ENCODE measurements at regions of chr1 and their contacts with region 1.

Region 1: DNA sequence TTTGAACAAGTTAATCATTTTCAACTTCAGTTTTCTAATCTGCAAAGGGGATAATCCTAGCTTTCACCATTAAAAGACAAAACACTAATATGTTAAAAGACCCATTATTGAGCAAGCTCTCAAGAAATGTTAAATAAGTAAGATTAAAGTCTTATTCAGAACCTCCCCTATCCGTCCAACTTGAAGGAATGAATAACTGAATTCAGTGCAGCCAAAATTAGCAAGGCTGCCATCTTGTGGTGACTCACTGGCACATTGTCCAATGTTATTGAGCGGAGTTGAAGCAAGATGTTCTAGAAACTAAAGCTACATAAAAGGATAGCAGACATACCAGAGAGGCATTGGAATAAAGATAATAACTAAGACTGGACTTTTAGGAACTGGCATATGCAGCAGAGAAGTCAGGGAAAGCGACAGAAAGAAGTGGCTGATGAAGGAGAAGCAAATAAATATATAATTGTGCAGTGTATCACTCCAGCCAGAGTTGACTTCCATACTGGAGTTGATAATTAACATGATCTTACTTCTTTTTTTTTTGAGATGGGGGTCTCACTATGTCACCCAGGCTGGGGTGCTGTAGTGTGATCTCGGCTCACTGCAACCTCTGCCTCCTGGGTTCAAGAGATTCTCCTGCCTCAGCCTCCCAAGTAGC is 8.2 kb upstream of the CAP1 start:
- DNase-seq: peak in 8 of 10 donors; percentile 31 to 89 (median 59)

Region 2: DNA sequence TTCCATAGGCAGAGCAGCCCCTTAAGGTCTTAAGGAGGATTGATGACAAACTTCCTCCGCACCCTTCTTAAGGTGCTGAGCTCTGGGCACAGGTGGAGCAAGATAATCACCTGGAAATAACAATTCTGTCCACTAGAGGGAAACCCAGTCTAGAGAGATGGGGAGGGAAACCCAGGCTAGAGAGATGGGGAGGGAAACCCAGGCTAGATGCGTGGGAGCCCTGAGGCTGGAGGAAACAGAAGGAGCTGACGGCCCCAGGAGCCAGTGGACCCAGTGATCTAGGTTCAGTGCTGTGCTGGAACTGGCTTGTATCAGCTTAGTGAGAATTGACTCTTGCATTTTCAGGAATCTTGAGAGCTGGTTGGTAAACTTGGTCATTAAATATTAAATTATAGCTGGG is 112.8 kb before region 1 on chr1:
- intact Hi-C with region 1: loop called (anchors 2 kb)
- DNase-seq: peak in 3 of 10 donors; percentile 19 to 80 (median 37)

Region 3: GRCh38 chr1:39973503-39974135 is 58.7 kb before region 1 on chr1:
- intact Hi-C with region 1: loop called (anchors 5 kb)
- DNase-seq: peak; percentile 42 to 97 (median 82)

Region 4: DNA sequence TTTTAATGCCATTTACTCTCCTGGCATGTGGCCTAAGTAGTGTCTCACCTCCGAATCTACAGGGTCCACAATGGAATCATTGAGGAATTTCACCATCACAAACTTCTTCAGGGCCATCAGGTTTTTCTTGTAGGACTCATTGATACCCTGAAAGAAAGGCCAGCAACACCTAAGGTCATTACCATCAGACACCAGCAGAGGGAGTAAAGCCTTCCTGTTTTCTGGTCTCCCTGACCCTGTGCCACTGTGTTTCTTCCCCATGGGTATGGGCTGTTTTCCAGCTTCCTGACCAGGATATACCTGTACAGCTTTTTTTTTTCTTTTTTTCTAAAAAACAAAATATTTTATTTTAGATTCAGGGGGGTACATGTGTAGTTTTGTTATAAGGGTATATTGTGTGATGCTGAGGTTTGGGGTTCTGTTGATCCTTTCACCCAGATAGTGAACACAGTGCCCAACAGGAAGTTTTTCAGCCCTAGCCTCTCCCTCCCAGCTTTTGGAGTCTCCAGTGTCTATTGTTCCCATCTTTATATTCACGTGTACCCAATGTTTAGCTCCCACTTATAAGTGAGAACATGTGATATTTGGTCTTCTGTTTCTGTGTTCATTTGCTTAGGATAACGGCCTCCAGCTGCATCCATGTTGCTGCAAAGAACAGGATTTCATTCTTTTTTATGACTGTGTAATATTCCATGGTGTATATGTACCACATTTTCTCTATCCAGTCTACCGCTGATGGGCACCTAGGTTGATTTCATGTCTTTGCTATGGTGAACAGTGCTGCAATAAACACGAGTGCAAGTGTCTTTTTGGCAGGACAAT is 46.4 kb after region 1 on chr1:
- intact Hi-C with region 1: no loop called
- DNase-seq: peak in 1 of 10 donors; percentile 17

Region 5: GRCh38 chr1:40153073-40153770 is 120.9 kb after region 1 on chr1:
- intact Hi-C with region 1: no loop called
- DNase-seq: no peak

Measured in posterior cingulate gyrus (tissue), 11 donors.